ENCODE measurements at regions of chr6 and their contacts with region 1.

Region 1: DNA sequence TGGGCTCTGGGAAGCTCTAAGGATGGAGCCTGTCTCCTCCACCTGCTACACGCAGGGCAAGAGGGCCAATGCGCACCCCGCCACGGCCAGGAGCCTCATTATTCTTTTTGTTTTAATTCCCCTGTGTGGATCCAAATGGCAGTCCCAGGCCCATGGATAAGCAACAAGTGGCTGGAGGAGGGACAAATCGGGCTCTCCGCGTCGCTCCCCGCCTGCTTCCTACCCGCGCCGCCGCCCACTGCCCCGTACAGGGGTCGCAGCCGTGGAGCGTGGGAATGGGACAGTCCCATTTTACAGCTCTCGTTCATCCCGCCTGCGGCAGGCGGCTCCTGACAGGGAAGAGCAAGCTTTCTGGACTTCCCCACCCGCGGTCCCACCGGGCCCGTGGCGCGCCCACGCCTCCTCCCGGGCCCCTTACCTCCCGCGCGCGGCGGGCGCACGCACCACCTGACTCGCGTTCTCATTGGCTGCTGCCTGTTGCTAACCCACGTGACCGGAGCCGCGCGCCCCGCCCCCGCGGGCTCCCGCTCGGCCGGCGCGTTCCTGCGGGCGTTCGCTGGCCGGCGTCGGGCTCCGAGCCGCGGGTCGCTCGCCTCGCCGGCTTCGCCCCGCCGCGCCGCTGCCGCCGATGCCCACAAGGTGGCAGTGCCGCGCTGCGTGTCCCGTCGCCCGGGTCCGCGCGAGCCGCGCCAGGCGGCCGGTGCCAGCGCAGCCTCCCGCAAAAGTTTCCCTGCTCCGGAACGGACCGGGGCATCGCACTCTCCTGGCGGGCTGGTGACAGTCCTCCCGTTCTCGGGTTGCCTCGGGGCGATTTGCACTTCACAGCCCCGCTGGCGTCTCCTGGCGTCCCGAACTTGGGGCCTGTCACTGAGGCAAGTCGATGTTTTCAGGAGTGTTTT is 93.3 kb downstream of the CD83 start:
- DNase-seq: peak; percentile 94
- H3K4me3 Mint-ChIP-seq: peak overlapping the region; percentile 74
- H3K27ac Mint-ChIP-seq: peak overlapping the region; percentile 85
- H3K4me1 Mint-ChIP-seq: peaks cover 17% of the 10 kb centered on the region
- H3K27me3 Mint-ChIP-seq: no peaks in the 10 kb centered on the region

Region 2: DNA sequence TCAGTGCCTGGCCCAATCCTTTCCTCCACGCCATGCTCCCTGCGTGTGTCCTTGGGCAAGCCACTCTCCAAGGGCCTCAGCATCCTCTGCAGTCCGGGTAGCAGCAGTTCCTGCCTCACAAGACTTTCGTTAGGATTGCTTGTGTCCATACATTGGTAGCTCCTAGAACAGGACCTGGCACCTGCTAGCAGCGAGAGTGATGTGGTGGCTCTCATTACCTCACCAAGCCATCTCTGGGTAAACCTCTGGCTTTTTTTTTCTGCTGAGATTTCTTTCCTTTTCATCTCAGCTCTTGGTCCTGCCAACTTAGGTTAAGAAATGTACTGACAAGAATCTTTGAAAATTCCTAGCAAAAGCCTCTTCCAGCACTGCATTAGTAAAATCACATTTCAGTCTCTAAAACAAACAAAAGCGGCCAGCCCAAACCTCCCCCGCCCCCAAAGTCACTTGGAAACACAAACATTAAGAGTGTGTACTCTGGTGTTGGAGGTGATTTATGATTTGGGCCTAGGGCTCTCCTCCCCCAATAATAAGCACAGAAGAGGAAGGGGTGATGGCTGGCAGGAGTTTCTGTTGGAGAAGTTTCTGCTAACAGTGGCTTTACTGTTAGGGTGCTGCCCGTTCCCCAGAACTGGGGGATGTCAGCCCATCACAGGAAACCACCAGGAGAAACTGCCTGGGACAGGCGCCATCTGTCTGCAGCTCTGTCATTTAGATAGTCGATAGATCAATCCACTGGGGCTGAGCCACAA is 105.9 kb after region 1 on chr6:
- CTCF ChIA-PET with region 1: interaction called, 6 read pairs
- POLR2A ChIA-PET with region 1: no interaction called
- intact Hi-C with region 1: loop called (anchors 5 kb)
- DNase-seq: peak; percentile 51
- H3K4me3 Mint-ChIP-seq: no peak overlapping the region
- H3K27ac Mint-ChIP-seq: no peak overlapping the region
- H3K4me1 Mint-ChIP-seq: peaks cover 4% of the 10 kb centered on the region
- H3K27me3 Mint-ChIP-seq: no peaks in the 10 kb centered on the region

Region 3: DNA sequence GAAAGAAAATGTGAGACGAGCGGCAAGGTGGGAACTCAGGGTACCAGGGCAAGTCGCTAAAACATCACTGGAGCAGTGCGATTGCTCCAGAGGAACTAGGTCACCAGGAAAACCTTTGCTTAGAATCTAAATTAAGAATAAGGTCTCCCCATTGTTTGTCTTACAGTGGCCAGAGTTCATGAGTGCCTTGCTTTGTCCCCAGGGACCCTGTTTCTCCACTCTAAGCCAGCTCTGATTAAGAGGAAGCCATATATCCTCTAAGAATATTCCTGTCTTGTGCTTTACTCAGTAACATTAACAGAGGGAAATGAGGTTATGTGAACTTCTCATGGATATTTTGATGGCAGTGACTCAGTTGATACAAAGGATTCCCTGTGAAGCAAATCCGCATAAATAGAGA is 212.4 kb after region 1 on chr6:
- CTCF ChIA-PET with region 1: no interaction called
- POLR2A ChIA-PET with region 1: no interaction called
- intact Hi-C with region 1: loop called (anchors 10 kb)
- DNase-seq: no peak
- H3K4me3 Mint-ChIP-seq: no peak overlapping the region
- H3K27ac Mint-ChIP-seq: peak overlapping the region; percentile 73
- H3K4me1 Mint-ChIP-seq: peaks cover 46% of the 10 kb centered on the region
- H3K27me3 Mint-ChIP-seq: no peaks in the 10 kb centered on the region

Region 4: GRCh38 chr6:14452567-14453527 is 241.9 kb after region 1 on chr6:
- CTCF ChIA-PET with region 1: interaction called, 3 read pairs
- POLR2A ChIA-PET with region 1: no interaction called
- intact Hi-C with region 1: loop called (anchors 5 kb)
- DNase-seq: peak; percentile 88
- H3K4me3 Mint-ChIP-seq: peak overlapping the region; percentile 34
- H3K27ac Mint-ChIP-seq: peak overlapping the region; percentile 88
- H3K4me1 Mint-ChIP-seq: peaks cover 76% of the 10 kb centered on the region
- H3K27me3 Mint-ChIP-seq: no peaks in the 10 kb centered on the region

Region 5: DNA sequence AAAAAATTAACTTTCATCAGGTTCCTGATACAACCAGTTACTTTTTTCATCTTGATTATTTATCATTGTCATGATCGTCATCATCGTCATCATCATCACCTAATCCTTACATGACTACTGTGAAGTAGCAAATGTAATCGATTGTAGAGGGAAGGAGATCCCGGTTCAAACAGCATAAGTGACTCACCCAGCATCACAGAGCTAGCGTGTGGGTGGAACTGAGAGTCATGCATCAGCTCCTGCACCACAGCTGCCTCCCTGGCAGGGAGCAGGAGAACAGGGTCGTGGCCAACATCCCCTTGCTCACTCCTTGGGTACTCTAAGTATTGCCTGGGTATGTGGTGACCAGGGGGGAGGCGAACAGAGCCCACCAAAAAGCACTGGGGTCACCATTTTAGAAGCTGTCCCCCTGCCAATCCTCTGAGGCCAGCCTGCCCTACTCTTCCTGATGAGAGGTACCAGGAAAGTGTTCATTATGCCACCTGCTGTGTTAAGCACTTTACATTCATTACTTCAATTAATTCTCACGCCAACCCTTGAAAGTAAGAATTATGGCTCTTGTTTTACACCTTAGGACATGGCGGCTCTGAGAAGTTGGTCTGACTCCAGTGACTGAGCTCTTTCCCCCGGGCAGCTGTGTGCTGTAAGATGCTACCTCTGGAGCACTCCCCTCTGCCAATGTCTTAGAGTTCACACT is 331.9 kb after region 1 on chr6:
- CTCF ChIA-PET with region 1: no interaction called
- POLR2A ChIA-PET with region 1: no interaction called
- intact Hi-C with region 1: no loop called
- DNase-seq: peak; percentile 90
- H3K4me3 Mint-ChIP-seq: no peak overlapping the region
- H3K27ac Mint-ChIP-seq: peak overlapping the region; percentile 53
- H3K4me1 Mint-ChIP-seq: peaks cover 31% of the 10 kb centered on the region
- H3K27me3 Mint-ChIP-seq: peaks cover 2% of the 10 kb centered on the region

Region 6: GRCh38 chr6:15245361-15246216 is 1034.7 kb after region 1 on chr6 and contains the start of gene JARID2:
- CTCF ChIA-PET with region 1: no interaction called
- POLR2A ChIA-PET with region 1: no interaction called
- intact Hi-C with region 1: loop called (anchors 2 kb)
- DNase-seq: peak; percentile 98
- H3K4me3 Mint-ChIP-seq: peak within 1 kb of the TSS; percentile 100
- H3K27ac Mint-ChIP-seq: peak within 1 kb of the TSS; percentile 94
- H3K4me1 Mint-ChIP-seq: peaks cover 18% of the 10 kb centered on the region
- H3K27me3 Mint-ChIP-seq: peaks cover 1% of the 10 kb centered on the region
- total RNA-seq, gene JARID2: 41.4 to 44.0 TPM

Region 7: DNA sequence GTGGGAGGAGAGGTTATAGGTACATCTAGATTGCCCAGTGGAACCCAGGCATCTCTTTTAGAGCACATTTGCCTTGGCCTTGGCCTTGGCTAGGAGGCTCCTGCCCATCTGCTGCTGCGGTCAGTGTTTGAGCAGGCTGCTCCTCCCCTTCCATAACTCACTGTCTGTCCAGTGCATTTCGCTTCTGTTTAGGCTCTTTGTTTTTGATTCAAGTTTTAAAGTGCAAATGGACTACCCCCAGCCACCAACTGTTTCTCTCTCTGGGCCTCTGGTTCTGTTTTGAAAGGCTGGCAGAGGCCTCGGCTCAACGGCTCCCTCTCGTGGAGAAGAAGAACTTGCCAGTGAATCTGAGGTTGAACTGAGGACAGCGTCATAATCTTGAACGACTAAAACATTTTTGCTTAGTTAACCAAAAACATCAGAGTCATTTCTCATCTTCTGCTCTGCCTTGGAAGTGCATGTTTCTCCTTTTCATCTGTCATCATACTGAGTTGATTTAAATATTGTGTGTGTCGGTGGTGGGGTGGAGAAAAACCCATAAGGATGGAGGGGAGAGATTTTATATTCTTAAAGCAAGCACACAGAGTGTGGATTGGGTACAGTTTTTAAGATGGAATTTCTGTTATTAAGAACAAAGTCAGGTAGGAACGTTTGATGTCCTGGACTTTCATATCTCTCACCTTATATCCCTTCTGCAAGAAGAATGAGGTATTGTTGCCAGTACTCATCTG is 1280.5 kb after region 1 on chr6:
- CTCF ChIA-PET with region 1: interaction called, 3 read pairs
- POLR2A ChIA-PET with region 1: no interaction called
- intact Hi-C with region 1: loop called (anchors 1 kb)
- DNase-seq: peak; percentile 84
- H3K4me3 Mint-ChIP-seq: no peak overlapping the region
- H3K27ac Mint-ChIP-seq: peak overlapping the region; percentile 76
- H3K4me1 Mint-ChIP-seq: peaks cover 35% of the 10 kb centered on the region
- H3K27me3 Mint-ChIP-seq: no peaks in the 10 kb centered on the region

Region 8: GRCh38 chr6:15621203-15622044 is 1410.5 kb after region 1 on chr6:
- CTCF ChIA-PET with region 1: interaction called, 6 read pairs
- POLR2A ChIA-PET with region 1: no interaction called
- intact Hi-C with region 1: loop called (anchors 5 kb)
- DNase-seq: peak; percentile 45
- H3K4me3 Mint-ChIP-seq: no peak overlapping the region
- H3K27ac Mint-ChIP-seq: no peak overlapping the region
- H3K4me1 Mint-ChIP-seq: peaks cover 46% of the 10 kb centered on the region
- H3K27me3 Mint-ChIP-seq: no peaks in the 10 kb centered on the region